ENCODE measurements at regions of chr14 and their contacts with region 1.

Region 1: DNA sequence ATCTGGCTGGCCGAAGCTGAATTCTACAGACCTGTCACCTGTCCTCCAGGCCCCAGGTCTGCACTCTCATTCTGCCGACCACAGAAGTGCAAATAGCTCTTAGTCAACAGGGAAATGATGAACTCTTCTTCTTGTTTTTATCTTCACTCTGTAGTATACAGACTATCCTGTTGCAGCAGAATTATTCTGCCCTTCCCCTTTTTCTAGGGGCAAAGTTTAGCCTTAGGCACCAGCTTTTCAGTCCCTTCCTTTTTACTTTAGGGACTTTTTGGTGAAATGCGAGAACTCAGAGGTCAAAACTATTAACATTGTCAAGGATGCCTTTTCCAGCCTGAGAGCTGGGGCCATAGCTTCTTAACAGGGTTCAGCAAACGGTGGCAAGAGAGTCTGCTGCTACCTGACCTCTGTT is 229.6 kb upstream of the EGLN3 start:
- DNase-seq: no peak
- ATAC-seq: peak; percentile 70
- H3K4me3 ChIP-seq: no peak overlapping the region
- H3K27ac ChIP-seq: no peak overlapping the region
- H3K4me1 ChIP-seq: peaks cover 11% of the 10 kb centered on the region
- H3K27me3 ChIP-seq: no peaks in the 10 kb centered on the region
- CTCF ChIP-seq: no peak
- EP300 ChIP-seq: no peak; a peak in 1 of 4 replicates
- POLR2A ChIP-seq: no peak
- RAD21 ChIP-seq: no peak

Region 2: DNA sequence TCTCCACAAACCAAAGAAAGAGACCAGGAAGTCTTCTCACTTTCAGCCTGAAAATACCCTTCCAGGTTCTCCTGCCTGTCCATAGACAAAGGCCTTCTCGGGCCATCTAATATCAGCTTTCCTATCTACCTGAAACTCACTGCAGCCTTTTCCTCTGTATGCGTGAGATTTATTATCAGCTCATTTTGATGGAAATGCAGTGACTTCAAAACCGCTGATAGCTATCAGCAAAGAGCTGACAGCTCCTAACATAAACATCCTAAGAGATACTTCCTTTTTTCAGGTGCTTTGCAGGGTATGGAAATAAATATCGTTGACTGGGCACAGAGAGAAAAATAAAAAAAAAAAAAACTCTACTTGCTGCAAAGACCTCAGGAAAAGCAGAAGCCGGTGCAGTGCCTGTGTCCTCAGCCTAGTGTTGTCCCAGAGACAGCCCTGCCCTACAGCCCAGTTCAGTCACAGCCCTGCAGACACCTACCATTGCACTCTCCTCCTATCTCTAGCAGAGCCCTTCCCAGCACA is 14.6 kb before region 1 on chr14:
- CTCF ChIA-PET with region 1: no interaction called
- POLR2A ChIA-PET with region 1: interaction called, 5 read pairs
- RAD21 ChIA-PET with region 1: interaction called, 3 read pairs
- SMC1A ChIA-PET with region 1: interaction called, 20 read pairs
- in situ Hi-C with region 1: no loop called
- intact Hi-C with region 1: no loop called
- DNase-seq: no peak
- ATAC-seq: peak; percentile 17; the same call in 1 of the 3 replicates
- H3K4me3 ChIP-seq: no peak overlapping the region
- H3K27ac ChIP-seq: no peak overlapping the region
- H3K4me1 ChIP-seq: no peaks in the 10 kb centered on the region
- H3K27me3 ChIP-seq: no peaks in the 10 kb centered on the region
- CTCF ChIP-seq: no peak
- EP300 ChIP-seq: no peak
- POLR2A ChIP-seq: no peak
- RAD21 ChIP-seq: no peak

Region 3: GRCh38 chr14:34190717-34191116 is 10.3 kb after region 1 on chr14:
- CTCF ChIA-PET with region 1: interaction called, 3 read pairs
- POLR2A ChIA-PET with region 1: interaction called, 5 read pairs
- RAD21 ChIA-PET with region 1: interaction called, 5 read pairs
- SMC1A ChIA-PET with region 1: interaction called, 26 read pairs
- in situ Hi-C with region 1: no loop called
- intact Hi-C with region 1: no loop called
- DNase-seq: no peak
- ATAC-seq: no peak
- H3K4me3 ChIP-seq: no peak overlapping the region
- H3K27ac ChIP-seq: no peak overlapping the region
- H3K4me1 ChIP-seq: no peaks in the 10 kb centered on the region
- H3K27me3 ChIP-seq: no peaks in the 10 kb centered on the region
- CTCF ChIP-seq: no peak
- EP300 ChIP-seq: no peak
- POLR2A ChIP-seq: no peak
- RAD21 ChIP-seq: no peak

Region 4: DNA sequence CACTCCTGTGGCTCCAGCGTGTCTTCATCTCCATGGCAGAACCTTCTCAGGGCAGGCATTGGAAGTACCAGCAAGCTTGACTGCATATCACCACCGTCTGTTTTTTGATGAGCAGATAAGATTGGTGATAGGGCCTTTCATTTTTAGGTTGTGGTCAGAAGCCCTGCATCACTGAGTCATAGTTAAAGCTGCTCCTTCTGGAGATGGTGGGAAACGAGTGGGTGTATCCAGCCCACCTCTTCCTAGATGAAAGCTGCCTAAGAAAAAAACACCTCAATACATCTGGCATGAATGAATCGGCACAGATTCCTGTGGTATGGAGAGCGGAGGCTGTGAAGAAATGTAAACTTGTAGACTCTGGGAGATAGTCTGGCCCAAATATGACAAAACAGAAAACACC is 19.1 kb after region 1 on chr14:
- CTCF ChIA-PET with region 1: interaction called, 3 read pairs
- POLR2A ChIA-PET with region 1: interaction called, 8 read pairs
- RAD21 ChIA-PET with region 1: interaction called, 7 read pairs
- SMC1A ChIA-PET with region 1: interaction called, 20 read pairs
- in situ Hi-C with region 1: no loop called
- intact Hi-C with region 1: no loop called
- DNase-seq: no peak
- ATAC-seq: peak; percentile 30; the same call in 1 of the 3 replicates
- H3K4me3 ChIP-seq: no peak overlapping the region
- H3K27ac ChIP-seq: no peak overlapping the region
- H3K4me1 ChIP-seq: no peaks in the 10 kb centered on the region
- H3K27me3 ChIP-seq: no peaks in the 10 kb centered on the region
- CTCF ChIP-seq: no peak
- EP300 ChIP-seq: no peak
- POLR2A ChIP-seq: no peak
- RAD21 ChIP-seq: no peak

Region 5: DNA sequence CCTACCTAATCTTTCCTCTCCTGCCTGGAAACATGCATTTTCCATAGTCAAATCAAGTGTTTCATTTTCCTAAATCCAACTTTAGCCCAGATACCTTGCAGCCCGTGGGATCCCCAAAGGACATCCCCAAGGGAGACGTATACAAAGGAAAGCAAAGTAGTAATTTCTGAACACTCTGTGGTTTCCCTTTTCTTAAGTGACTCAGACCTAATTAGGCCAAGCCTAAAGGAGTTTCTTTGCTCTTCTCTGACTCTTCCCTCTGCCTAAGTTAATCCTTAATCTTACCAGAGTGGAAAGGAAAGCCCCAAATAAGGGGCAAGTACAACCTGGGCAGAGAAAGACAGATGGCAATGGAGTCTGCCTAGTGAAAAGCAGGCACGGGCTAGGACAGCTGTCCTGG is 31.3 kb after region 1 on chr14:
- CTCF ChIA-PET with region 1: interaction called, 4 read pairs
- POLR2A ChIA-PET with region 1: interaction called, 4 read pairs
- RAD21 ChIA-PET with region 1: interaction called, 11 read pairs
- SMC1A ChIA-PET with region 1: interaction called, 44 read pairs
- in situ Hi-C with region 1: no loop called
- intact Hi-C with region 1: no loop called
- DNase-seq: peak; percentile 45
- ATAC-seq: peak; percentile 91
- H3K4me3 ChIP-seq: no peak overlapping the region
- H3K27ac ChIP-seq: no peak overlapping the region
- H3K4me1 ChIP-seq: no peaks in the 10 kb centered on the region; the same call in 1 of the 2 replicates
- H3K27me3 ChIP-seq: no peaks in the 10 kb centered on the region; a peak in 1 of 4 replicates
- CTCF ChIP-seq: no peak
- EP300 ChIP-seq: peak; percentile 30 to 74; a peak in 2 of 4 replicates
- POLR2A ChIP-seq: no peak
- RAD21 ChIP-seq: no peak

Region 6: DNA sequence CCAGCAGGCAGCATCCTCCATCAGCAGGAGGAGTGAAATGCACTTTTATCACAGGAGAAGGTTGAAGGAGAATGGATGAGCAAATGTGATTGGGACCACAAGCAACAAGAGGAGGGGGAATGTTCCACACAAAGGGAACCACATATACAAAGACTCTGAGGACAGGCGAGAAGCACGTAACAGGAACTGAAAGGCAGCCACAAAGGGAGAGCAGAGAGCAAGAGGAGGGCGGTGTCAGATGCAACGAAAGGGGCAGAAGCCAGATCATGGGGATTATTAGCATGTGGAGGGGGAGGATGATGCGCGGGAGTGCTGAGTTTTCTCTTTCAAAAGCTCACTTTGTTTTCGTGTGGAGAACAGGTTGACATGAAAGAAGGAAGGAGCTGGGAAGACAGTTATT is 40.5 kb after region 1 on chr14:
- CTCF ChIA-PET with region 1: interaction called, 7 read pairs
- POLR2A ChIA-PET with region 1: interaction called, 14 read pairs
- RAD21 ChIA-PET with region 1: interaction called, 30 read pairs
- SMC1A ChIA-PET with region 1: interaction called, 44 read pairs
- in situ Hi-C with region 1: no loop called
- intact Hi-C with region 1: no loop called
- DNase-seq: peak; percentile 40
- ATAC-seq: peak; percentile 99
- H3K4me3 ChIP-seq: no peak overlapping the region
- H3K27ac ChIP-seq: no peak overlapping the region
- H3K4me1 ChIP-seq: no peaks in the 10 kb centered on the region
- H3K27me3 ChIP-seq: peaks cover 0 to 2% of the 10 kb centered on the region in 2 experiments; a peak in 1 of 4 replicates
- CTCF ChIP-seq: no peak
- EP300 ChIP-seq: peak in 1 of 2 experiments; percentile 83; a peak in 2 of 4 replicates
- POLR2A ChIP-seq: no peak
- RAD21 ChIP-seq: no peak

Region 7: DNA sequence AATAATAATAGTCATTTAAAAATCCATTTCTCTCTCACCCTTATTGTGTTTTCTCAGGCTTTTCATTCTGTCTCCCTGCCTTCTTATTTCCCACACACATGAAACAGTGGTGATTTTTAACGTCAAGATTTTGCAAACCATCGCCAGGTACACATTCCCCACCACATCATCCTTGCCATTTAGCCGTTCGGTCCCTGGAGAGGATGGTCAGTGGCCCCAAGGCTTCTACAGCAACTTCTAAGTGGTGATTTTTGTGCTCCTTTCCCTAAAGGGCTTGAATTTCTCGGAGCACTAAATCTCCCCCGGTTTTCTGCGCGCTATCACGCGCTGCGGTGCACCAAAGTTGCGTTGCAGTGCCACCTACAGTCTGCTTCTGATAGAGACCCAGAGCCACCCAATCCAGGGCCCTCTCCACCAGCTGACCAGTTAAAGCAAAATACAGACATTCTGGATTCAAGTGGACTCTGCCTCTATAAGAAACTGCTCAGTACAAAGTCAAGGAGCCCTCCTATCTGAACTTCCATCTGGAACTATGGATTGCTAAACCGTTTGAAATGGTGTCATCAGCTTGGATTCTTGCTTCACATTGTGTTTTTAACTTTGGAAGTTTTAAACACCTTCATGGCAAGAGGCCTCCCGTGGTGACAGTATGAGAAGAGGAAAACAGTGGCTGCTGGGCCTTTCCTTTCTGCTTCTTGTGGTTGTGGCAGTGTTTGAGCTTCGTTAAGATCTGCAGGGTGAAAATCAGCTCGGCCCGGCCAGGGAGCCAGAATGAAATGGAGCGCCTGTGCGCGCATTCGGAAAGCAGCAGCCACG is 47.6 kb after region 1 on chr14:
- CTCF ChIA-PET with region 1: interaction called, 4 read pairs
- POLR2A ChIA-PET with region 1: no interaction called
- RAD21 ChIA-PET with region 1: interaction called, 30 read pairs
- SMC1A ChIA-PET with region 1: interaction called, 10 read pairs
- in situ Hi-C with region 1: no loop called
- intact Hi-C with region 1: no loop called
- DNase-seq: no peak
- ATAC-seq: peak; percentile 96
- H3K4me3 ChIP-seq: no peak overlapping the region
- H3K27ac ChIP-seq: no peak overlapping the region
- H3K4me1 ChIP-seq: no peaks in the 10 kb centered on the region
- H3K27me3 ChIP-seq: peaks cover 0 to 2% of the 10 kb centered on the region in 2 experiments; a peak in 1 of 4 replicates
- CTCF ChIP-seq: peak; percentile 71 to 78 (median 72); a peak in 5 of 6 replicates
- EP300 ChIP-seq: no peak
- POLR2A ChIP-seq: no peak
- RAD21 ChIP-seq: peak; percentile 81

Region 8: GRCh38 chr14:34322940-34323418 is 142.5 kb after region 1 on chr14:
- CTCF ChIA-PET with region 1: no interaction called
- POLR2A ChIA-PET with region 1: no interaction called
- RAD21 ChIA-PET with region 1: no interaction called
- SMC1A ChIA-PET with region 1: no interaction called
- in situ Hi-C with region 1: no loop called
- intact Hi-C with region 1: no loop called
- DNase-seq: no peak
- ATAC-seq: peak; percentile 95
- H3K4me3 ChIP-seq: no peak overlapping the region
- H3K27ac ChIP-seq: no peak overlapping the region
- H3K4me1 ChIP-seq: no peaks in the 10 kb centered on the region
- H3K27me3 ChIP-seq: no peaks in the 10 kb centered on the region
- CTCF ChIP-seq: peak; percentile 70 to 72 (median 71)
- EP300 ChIP-seq: no peak
- POLR2A ChIP-seq: no peak
- RAD21 ChIP-seq: no peak